ENCODE measurements at regions of chr17 and their contacts with region 1.

Region 1: DNA sequence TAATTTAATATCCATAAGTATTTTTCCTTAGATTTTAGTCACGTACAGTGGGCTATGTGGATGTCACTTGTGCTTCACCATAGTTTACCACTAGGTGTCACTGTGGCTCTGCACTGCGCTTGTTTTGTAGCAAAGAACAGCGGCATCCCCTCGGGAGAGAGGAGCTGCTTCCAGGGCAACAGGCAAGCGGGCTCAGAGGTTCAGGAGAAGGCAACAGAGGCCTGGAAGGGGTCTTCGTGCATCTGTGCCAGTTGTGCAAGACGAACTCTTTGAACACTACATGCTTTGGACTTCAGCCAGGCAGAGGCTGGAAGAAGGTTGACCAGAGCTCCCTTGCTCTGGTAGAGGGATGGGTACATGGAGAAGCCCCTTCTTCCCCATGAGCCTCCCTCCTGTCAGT is 20.6 kb downstream of the CYB561 start:
- DNase-seq: peak; percentile 82 to 83
- H3K4me3 ChIP-seq: no peak overlapping the region
- CTCF ChIP-seq: peak in 1 of 3 donors; percentile 70
- POLR2A ChIP-seq: no peak

Region 2: GRCh38 chr17:62614142-62614541 is 811.3 kb before region 1 on chr17:
- intact Hi-C with region 1: no loop called
- DNase-seq: peak in 1 of 2 donors; percentile 78
- H3K4me3 ChIP-seq: no peak overlapping the region
- CTCF ChIP-seq: no peak
- POLR2A ChIP-seq: no peak

Region 3: GRCh38 chr17:63611354-63611753 is 185.9 kb after region 1 on chr17:
- intact Hi-C with region 1: loop called (anchors 5 kb)
- DNase-seq: no peak
- H3K4me3 ChIP-seq: no peak overlapping the region
- CTCF ChIP-seq: no peak
- POLR2A ChIP-seq: no peak